ENCODE measurements at regions of chr5 and their contacts with region 1.

Region 1: GRCh38 chr5:41636605-41637004 is 126.2 kb upstream of the PLCXD3 start:
- DNase-seq: peak; percentile 54
- ATAC-seq: peak; percentile 89
- H3K4me3 ChIP-seq: no peak overlapping the region
- H3K27ac ChIP-seq: no peak overlapping the region
- H3K4me1 ChIP-seq: peaks cover 35% of the 10 kb centered on the region
- H3K27me3 ChIP-seq: no peaks in the 10 kb centered on the region
- CTCF ChIP-seq: 0 out of 2 replicates have a peak, but pooled peaks have one; percentile 11
- EP300 ChIP-seq: no peak
- POLR2A ChIP-seq: no peak
- RAD21 ChIP-seq: no peak

Region 2: GRCh38 chr5:41182666-41183065 is 453.9 kb before region 1 on chr5:
- CTCF ChIA-PET with region 1: no interaction called
- POLR2A ChIA-PET with region 1: no interaction called
- in situ Hi-C with region 1: no loop called
- intact Hi-C with region 1: loop called (anchors 10 kb)
- DNase-seq: peak; percentile 83
- ATAC-seq: peak; percentile 95
- H3K4me3 ChIP-seq: no peak overlapping the region
- H3K27ac ChIP-seq: no peak overlapping the region
- H3K4me1 ChIP-seq: peaks cover 29% of the 10 kb centered on the region
- H3K27me3 ChIP-seq: no peaks in the 10 kb centered on the region
- CTCF ChIP-seq: no peak
- EP300 ChIP-seq: no peak
- POLR2A ChIP-seq: no peak
- RAD21 ChIP-seq: no peak

Region 3: DNA sequence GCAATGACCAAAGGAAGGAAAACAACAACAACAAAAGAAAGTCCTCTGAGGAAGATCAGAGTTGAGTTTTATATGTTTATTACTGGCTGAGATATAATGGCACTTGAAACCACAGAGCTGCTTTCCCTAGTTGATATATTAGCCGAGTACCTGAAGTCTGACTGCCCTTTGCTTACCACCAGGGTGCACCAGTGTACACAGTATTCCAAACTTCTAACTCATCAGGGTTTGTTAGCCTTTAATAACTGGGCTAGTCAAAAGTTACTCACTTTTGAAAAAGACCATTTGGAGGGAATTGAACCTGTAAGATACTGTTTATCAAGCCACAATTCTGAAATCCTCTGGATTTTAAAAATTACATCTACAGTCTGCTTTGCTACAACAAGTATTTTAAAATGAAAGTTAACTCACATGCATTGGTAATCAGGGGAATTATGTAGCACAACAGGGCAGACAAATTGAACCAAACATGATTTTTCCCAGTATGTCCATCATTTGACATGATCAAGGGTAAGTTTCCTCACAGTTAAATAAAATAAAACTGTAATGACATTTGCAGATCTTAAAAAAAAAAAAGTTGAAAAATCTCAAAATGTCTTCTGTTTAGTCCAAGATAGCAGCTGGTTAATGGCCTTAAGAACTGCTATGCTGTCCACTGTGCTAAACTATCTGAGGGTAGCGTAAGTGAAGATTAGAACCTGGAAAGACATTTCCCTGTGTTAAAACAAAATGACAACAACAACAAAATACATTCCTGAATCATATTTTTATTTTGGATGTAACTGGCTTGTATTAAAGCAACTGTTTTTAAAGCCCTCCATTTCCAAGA is 366.0 kb before region 1 on chr5:
- CTCF ChIA-PET with region 1: interaction called, 7 read pairs
- POLR2A ChIA-PET with region 1: no interaction called
- in situ Hi-C with region 1: loop called (anchors 10 kb)
- intact Hi-C with region 1: loop called (anchors 1 kb)
- DNase-seq: peak; percentile 43
- ATAC-seq: peak; percentile 95
- H3K4me3 ChIP-seq: no peak overlapping the region
- H3K27ac ChIP-seq: no peak overlapping the region
- H3K4me1 ChIP-seq: no peaks in the 10 kb centered on the region
- H3K27me3 ChIP-seq: no peaks in the 10 kb centered on the region; a peak in 1 of 5 replicates
- CTCF ChIP-seq: peak; percentile 76
- EP300 ChIP-seq: no peak
- POLR2A ChIP-seq: no peak
- RAD21 ChIP-seq: peak; percentile 57; the same call in 1 of the 2 replicates

Region 4: DNA sequence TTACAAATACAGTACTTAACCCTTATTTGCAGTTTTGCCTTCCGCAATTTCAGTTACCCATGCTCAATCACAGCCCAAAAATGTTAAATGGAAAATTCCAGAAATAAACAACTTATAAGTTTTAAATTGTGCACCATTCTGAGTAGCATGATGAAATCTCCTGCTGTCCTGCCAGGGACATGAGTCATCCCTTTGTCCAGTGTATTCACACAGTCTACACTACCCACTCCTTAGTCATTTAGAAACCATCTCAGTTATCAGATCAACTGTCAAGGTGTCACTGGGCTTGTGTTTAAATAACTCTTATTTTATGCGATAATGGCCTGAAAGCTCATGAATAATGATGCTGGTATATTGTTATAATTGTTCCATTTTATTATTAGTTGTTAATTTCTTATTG is 222.0 kb before region 1 on chr5:
- CTCF ChIA-PET with region 1: no interaction called
- POLR2A ChIA-PET with region 1: no interaction called
- in situ Hi-C with region 1: no loop called
- intact Hi-C with region 1: loop called (anchors 10 kb)
- DNase-seq: peak; percentile 79
- ATAC-seq: peak; percentile 95
- H3K4me3 ChIP-seq: no peak overlapping the region
- H3K27ac ChIP-seq: no peak overlapping the region
- H3K4me1 ChIP-seq: peaks cover 7% of the 10 kb centered on the region
- H3K27me3 ChIP-seq: no peaks in the 10 kb centered on the region
- CTCF ChIP-seq: no peak
- EP300 ChIP-seq: peak in 1 of 2 experiments; percentile 54; a peak in 2 of 4 replicates
- POLR2A ChIP-seq: no peak
- RAD21 ChIP-seq: no peak

Region 5: DNA sequence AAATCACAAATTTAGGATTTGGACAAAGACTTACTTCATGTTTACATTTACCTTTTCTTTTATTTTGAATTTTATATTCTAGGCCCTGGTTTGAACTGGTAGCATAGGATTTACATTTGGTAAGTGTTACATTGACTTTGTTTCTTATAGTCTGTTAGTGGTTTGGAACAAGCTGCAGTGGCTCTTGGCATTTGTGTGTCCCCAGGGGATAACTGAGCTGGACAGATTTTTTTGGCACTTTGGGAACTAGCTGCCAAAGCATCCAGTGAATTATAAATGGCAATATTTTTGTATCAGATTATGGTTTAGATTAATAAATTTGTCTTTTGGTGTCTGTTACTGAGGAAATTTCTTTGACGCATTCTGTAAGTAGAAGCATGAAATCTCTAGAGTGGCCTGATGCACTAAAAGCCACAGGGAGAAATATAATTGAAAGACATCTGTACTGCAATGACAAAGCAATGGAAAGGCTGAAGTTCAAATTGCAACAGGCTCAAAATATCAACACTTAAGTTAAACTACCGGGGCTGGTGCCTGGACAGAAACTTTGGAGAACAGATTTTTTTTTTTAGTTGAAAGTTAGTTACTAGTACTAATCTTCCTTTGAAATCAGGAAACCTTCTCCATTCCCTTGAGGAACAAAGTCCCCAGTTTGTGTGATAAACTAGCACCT is 18.6 kb before region 1 on chr5:
- CTCF ChIA-PET with region 1: no interaction called
- POLR2A ChIA-PET with region 1: no interaction called
- in situ Hi-C with region 1: no loop called
- intact Hi-C with region 1: loop called (anchors 1 kb)
- DNase-seq: no peak
- ATAC-seq: peak; percentile 62; the same call in 2 of the 3 replicates
- H3K4me3 ChIP-seq: no peak overlapping the region
- H3K27ac ChIP-seq: no peak overlapping the region
- H3K4me1 ChIP-seq: peaks cover 10% of the 10 kb centered on the region
- H3K27me3 ChIP-seq: no peaks in the 10 kb centered on the region
- CTCF ChIP-seq: no peak
- EP300 ChIP-seq: no peak
- POLR2A ChIP-seq: no peak
- RAD21 ChIP-seq: no peak

Measured in HepG2 (cell line).